H1 (cell line): ENCODE measurements at regions of chr12 and their contacts with region 1.

Region 1: DNA sequence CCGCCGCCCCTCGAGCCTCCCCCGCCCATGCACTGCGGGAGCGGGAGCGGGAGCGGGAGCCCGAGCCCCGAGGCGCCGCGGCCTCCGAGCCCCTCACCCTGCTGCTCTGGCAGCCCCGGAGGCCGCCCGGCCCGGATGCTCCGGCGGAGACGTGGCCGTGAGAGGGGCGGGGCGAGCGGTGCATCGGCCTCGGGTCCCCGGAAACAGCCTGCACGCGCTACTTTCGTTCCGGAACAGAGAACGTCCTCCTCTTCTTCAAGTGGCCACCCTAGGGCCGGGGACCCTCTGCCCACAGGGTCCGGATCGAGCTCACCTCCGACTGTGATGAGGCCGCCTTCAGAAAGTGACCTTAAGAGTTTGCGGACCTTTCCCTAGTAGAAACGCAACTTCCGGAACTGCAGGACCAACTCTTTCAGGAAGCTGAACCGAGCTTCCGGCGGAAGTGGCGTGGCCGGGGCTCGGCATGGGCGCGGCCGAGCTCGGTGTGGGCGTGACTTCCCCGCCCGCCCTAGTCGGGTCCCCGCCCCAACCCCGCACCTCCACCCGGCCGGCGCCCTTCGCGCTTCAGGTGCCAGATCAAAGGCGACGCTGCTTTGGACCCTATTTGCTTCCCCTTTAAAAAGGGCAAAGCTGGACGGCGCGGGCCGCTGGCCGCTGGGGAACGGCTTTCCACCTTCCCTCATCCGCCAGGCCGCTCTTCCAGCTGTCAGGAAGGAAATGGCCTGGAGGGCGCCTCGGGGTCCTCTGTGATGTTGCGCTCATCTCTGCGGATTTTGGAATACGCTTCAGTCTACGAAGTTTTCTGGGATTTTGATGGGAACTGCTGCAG is at the start of gene GOLGA3:
- DNase-seq: peak; percentile 85 to 92
- H3K4me3 ChIP-seq: peak within 1 kb of the TSS; percentile 57 to 96 (median 93)
- H3K27ac ChIP-seq: peak within 1 kb of the TSS; percentile 100
- H3K4me1 ChIP-seq: peaks cover 0 to 9% (median under 1%) of the 10 kb centered on the region in 4 experiments; a peak in 1 of 7 replicates
- H3K27me3 ChIP-seq: no peaks in the 10 kb centered on the region
- CTCF ChIP-seq: no peak
- EP300 ChIP-seq: peak in 1 of 2 experiments; percentile 12; a peak in 1 of 3 replicates
- POLR2A ChIP-seq: peak; percentile 51 to 75; a peak in 2 of 3 replicates
- RAD21 ChIP-seq: no peak
- total RNA-seq, gene GOLGA3: 33.1 and 33.4 TPM in 2 replicates

Region 2: GRCh38 chr12:132847363-132848356 is 18.7 kb after region 1 on chr12:
- CTCF ChIA-PET with region 1: interaction called, 5 read pairs
- POLR2A ChIA-PET with region 1: interaction called, 11 read pairs
- DNase-seq: peak; percentile 47 to 68
- H3K4me3 ChIP-seq: peak overlapping the region in 1 of 4 experiments; percentile 25; a peak in 2 of 8 replicates
- H3K27ac ChIP-seq: peak overlapping the region; percentile 21; the same call in 1 of the 2 replicates
- H3K4me1 ChIP-seq: peaks cover 0 to 13% (median 6%) of the 10 kb centered on the region in 4 experiments; a peak in 6 of 7 replicates
- H3K27me3 ChIP-seq: no peaks in the 10 kb centered on the region
- CTCF ChIP-seq: no peak
- EP300 ChIP-seq: no peak
- POLR2A ChIP-seq: no peak
- RAD21 ChIP-seq: no peak

Region 3: DNA sequence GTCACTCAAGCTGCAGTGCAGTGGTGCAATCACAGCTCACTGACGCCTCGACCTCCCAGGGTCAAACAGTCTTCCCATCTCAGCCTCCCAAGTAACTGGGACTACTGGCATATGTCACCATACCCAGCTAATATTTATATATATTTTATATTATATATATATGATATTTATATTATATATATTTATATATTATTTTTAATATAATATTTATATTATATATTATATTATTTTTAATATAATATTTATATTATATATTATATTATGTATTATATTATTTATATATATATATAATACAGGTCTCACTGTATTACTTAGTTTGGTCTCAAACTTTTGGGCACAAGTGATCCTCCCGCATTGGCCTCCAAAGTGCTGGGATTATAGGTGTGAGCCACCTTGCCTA is 217.8 kb after region 1 on chr12:
- CTCF ChIA-PET with region 1: no interaction called
- POLR2A ChIA-PET with region 1: no interaction called
- DNase-seq: no peak
- H3K4me3 ChIP-seq: no peak overlapping the region
- H3K27ac ChIP-seq: no peak overlapping the region
- H3K4me1 ChIP-seq: no peaks in the 10 kb centered on the region
- H3K27me3 ChIP-seq: no peaks in the 10 kb centered on the region
- CTCF ChIP-seq: no peak
- EP300 ChIP-seq: no peak
- POLR2A ChIP-seq: no peak
- RAD21 ChIP-seq: no peak